ENCODE measurements at regions of chr6 and their contacts with region 1.

Region 1: GRCh38 chr6:4164117-4164442 is 28.7 kb upstream of the ECI2 start:
- DNase-seq: no peak
- ATAC-seq: no peak
- H3K4me3 ChIP-seq: no peak overlapping the region
- H3K4me3 Mint-ChIP-seq: no peak overlapping the region
- H3K27ac ChIP-seq: no peak overlapping the region
- H3K27ac Mint-ChIP-seq: no peak overlapping the region
- H3K4me1 ChIP-seq: no peaks in the 10 kb centered on the region
- H3K4me1 Mint-ChIP-seq: no peaks in the 10 kb centered on the region
- H3K27me3 ChIP-seq: no peaks in the 10 kb centered on the region
- H3K27me3 Mint-ChIP-seq: no peaks in the 10 kb centered on the region
- CTCF ChIP-seq: no peak

Region 2: GRCh38 chr6:4210629-4211423 is 46.7 kb after region 1 on chr6:
- CTCF ChIA-PET with region 1: no interaction called
- POLR2A ChIA-PET with region 1: no interaction called
- intact Hi-C with region 1: loop called in 1 of 2 experiments (anchors 2 kb)
- DNase-seq: peak; percentile 22 to 66 (median 39)
- ATAC-seq: peak; percentile 81
- H3K4me3 ChIP-seq: no peak overlapping the region
- H3K4me3 Mint-ChIP-seq: no peak overlapping the region
- H3K27ac ChIP-seq: no peak overlapping the region
- H3K27ac Mint-ChIP-seq: peak overlapping the region; percentile 1
- H3K4me1 ChIP-seq: no peaks in the 10 kb centered on the region
- H3K4me1 Mint-ChIP-seq: peaks cover 26% of the 10 kb centered on the region
- H3K27me3 ChIP-seq: no peaks in the 10 kb centered on the region
- H3K27me3 Mint-ChIP-seq: peaks cover 4% of the 10 kb centered on the region
- CTCF ChIP-seq: peak; percentile 72

Measured in CD4-positive, alpha-beta T cell (primary cell).